ENCODE measurements at regions of chr4 and their contacts with region 1.

Region 1: GRCh38 chr4:186037692-186038658 is 31.0 kb upstream of the TLR3 start:
- DNase-seq: peak in 1 of 2 experiments; percentile 61
- H3K4me3 ChIP-seq: no peak overlapping the region
- H3K4me3 Mint-ChIP-seq: no peak overlapping the region
- H3K27ac Mint-ChIP-seq: no peak overlapping the region
- H3K4me1 ChIP-seq: 0 out of 2 replicates have a peak, but pooled peaks cover 5% of the 10 kb centered on the region
- H3K4me1 Mint-ChIP-seq: no peaks in the 10 kb centered on the region
- H3K27me3 ChIP-seq: no peaks in the 10 kb centered on the region
- H3K27me3 Mint-ChIP-seq: peaks cover 3% of the 10 kb centered on the region
- CTCF ChIP-seq: peak; percentile 47 to 62

Region 2: DNA sequence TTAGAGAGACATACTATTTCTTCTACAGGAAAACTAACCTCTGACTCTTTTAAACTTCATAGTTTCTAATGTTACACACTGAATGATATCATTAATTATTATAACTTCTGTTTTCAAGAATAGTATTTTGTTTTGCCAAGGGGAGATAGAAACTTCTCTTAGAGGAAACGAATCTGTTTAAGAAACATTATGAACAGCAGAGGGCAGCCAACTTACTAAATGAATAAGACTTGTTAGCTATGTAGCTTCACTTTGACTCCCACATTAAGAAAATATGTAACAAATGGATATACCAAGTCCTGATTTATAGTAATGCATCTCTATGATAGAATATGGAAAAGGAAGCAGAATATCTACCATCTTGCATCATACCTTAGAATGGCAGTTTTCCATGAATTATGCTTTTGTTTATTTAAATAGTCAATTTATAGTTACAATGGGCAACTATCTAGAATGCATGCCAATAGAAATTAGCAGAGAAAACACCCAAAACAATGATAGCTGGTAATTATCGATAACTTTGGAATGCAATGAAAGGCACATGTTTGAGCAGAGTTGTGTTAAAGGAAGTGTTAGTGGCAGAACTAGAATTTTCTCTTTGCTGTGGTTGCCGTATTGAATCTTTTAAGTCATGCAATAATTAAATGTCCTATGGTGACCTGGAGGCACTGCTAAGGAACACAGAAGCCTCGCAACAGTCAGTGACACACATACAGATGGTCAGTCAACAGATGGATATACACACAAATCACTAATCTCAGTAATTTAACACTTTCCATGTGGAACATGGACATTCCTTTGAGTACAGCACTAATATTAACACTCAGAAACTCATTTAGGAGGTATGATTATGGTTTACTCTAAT is 396.9 kb before region 1 on chr4:
- CTCF ChIA-PET with region 1: interaction called, 9 read pairs
- POLR2A ChIA-PET with region 1: no interaction called
- intact Hi-C with region 1: loop called (anchors 1 kb)
- DNase-seq: peak in 1 of 2 experiments; percentile 42
- H3K4me3 ChIP-seq: no peak overlapping the region
- H3K4me3 Mint-ChIP-seq: no peak overlapping the region
- H3K27ac Mint-ChIP-seq: no peak overlapping the region
- H3K4me1 ChIP-seq: no peaks in the 10 kb centered on the region
- H3K4me1 Mint-ChIP-seq: peaks cover 16% of the 10 kb centered on the region
- H3K27me3 ChIP-seq: no peaks in the 10 kb centered on the region
- H3K27me3 Mint-ChIP-seq: no peaks in the 10 kb centered on the region
- CTCF ChIP-seq: peak; percentile 10 to 47

Measured in Caco-2 (cell line).